Activated CD8-positive, alpha-beta T cell treated with anti-CD3 and anti-CD28 coated beads for 36 hours (primary cell): ENCODE measurements at regions of chr11 and their contacts with region 1.

Region 1: GRCh38 chr11:10540923-10541560 is at the start of gene RNF141:
- DNase-seq: peak; percentile 97
- ATAC-seq: peak; percentile 98
- H3K4me3 Mint-ChIP-seq: peak within 1 kb of the TSS; percentile 93
- H3K27ac Mint-ChIP-seq: peak within 1 kb of the TSS; percentile 86
- H3K4me1 Mint-ChIP-seq: peaks cover 24% of the 10 kb centered on the region
- H3K27me3 Mint-ChIP-seq: no peaks in the 10 kb centered on the region
- CTCF ChIP-seq: peak; percentile 87
- total RNA-seq, gene RNF141: 19.4 to 20.8 TPM

Region 2: GRCh38 chr11:10405855-10406592 is 135.0 kb before region 1 on chr11:
- CTCF ChIA-PET with region 1: interaction called, 17 read pairs
- POLR2A ChIA-PET with region 1: no interaction called
- intact Hi-C with region 1: no loop called
- DNase-seq: peak; percentile 69
- ATAC-seq: peak; percentile 92
- H3K4me3 Mint-ChIP-seq: no peak overlapping the region
- H3K27ac Mint-ChIP-seq: no peak overlapping the region
- H3K4me1 Mint-ChIP-seq: peaks cover 10% of the 10 kb centered on the region
- H3K27me3 Mint-ChIP-seq: no peaks in the 10 kb centered on the region
- CTCF ChIP-seq: peak; percentile 70

Region 3: DNA sequence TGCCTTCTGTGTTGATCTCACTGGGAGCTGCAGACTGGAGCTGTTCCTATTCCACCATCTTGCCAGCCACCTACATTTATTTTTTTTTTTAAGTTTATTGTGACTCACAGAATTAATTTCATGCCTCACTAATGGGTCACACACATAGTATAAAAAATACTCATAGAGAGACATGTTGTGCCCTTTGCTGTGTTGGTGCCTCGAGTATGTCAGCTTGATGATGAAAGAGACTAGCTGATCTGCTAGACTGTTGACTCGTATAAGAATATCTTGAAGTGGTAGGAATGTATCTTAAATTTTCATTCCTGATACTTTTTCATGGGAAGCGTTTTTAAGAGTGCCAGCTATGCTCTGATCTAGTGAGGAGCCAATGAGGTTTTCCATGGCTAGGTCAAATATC is 114.6 kb before region 1 on chr11:
- CTCF ChIA-PET with region 1: interaction called, 12 read pairs
- POLR2A ChIA-PET with region 1: no interaction called
- intact Hi-C with region 1: no loop called
- DNase-seq: no peak
- ATAC-seq: no peak
- H3K4me3 Mint-ChIP-seq: no peak overlapping the region
- H3K27ac Mint-ChIP-seq: no peak overlapping the region
- H3K4me1 Mint-ChIP-seq: no peaks in the 10 kb centered on the region
- H3K27me3 Mint-ChIP-seq: peaks cover 2% of the 10 kb centered on the region
- CTCF ChIP-seq: no peak

Region 4: GRCh38 chr11:10455637-10456487 is 85.2 kb before region 1 on chr11:
- CTCF ChIA-PET with region 1: interaction called, 40 read pairs
- POLR2A ChIA-PET with region 1: interaction called, 7 read pairs
- intact Hi-C with region 1: loop called (anchors 5 kb)
- DNase-seq: peak; percentile 89
- ATAC-seq: peak; percentile 70
- H3K4me3 Mint-ChIP-seq: peak overlapping the region; percentile 91
- H3K27ac Mint-ChIP-seq: peak overlapping the region; percentile 97
- H3K4me1 Mint-ChIP-seq: peaks cover 81% of the 10 kb centered on the region
- H3K27me3 Mint-ChIP-seq: no peaks in the 10 kb centered on the region
- CTCF ChIP-seq: no peak

Region 5: DNA sequence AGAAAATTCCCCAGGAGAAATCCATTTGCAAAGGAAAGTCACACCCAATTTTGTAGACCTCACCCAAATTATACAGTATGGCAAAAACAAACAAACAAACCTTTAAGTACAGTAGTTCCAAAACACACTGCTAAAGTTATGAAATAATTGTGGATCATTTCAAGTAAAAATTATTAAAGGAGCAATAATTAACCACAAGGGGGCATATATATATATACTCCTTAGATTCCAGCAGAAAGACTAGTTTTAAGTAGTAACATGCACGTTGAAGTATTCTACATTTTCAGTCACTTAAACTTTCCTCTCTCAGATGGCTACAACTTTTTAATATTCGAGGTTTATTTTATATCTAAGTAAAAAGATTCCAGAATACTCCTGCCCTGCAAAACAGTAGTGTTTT is 26.8 kb before region 1 on chr11:
- CTCF ChIA-PET with region 1: interaction called, 23 read pairs
- POLR2A ChIA-PET with region 1: interaction called, 3 read pairs
- intact Hi-C with region 1: no loop called
- DNase-seq: no peak
- ATAC-seq: no peak
- H3K4me3 Mint-ChIP-seq: no peak overlapping the region
- H3K27ac Mint-ChIP-seq: no peak overlapping the region
- H3K4me1 Mint-ChIP-seq: peaks cover 13% of the 10 kb centered on the region
- H3K27me3 Mint-ChIP-seq: no peaks in the 10 kb centered on the region
- CTCF ChIP-seq: no peak

Region 6: GRCh38 chr11:10606536-10607208 is 65.6 kb after region 1 on chr11:
- CTCF ChIA-PET with region 1: no interaction called
- POLR2A ChIA-PET with region 1: no interaction called
- intact Hi-C with region 1: loop called (anchors 10 kb)
- DNase-seq: no peak
- ATAC-seq: peak; percentile 24
- H3K4me3 Mint-ChIP-seq: no peak overlapping the region
- H3K27ac Mint-ChIP-seq: no peak overlapping the region
- H3K4me1 Mint-ChIP-seq: peaks cover 2% of the 10 kb centered on the region
- H3K27me3 Mint-ChIP-seq: peaks cover 6% of the 10 kb centered on the region
- CTCF ChIP-seq: no peak

Region 7: GRCh38 chr11:10653926-10654810 is 113.1 kb after region 1 on chr11:
- CTCF ChIA-PET with region 1: interaction called, 25 read pairs
- POLR2A ChIA-PET with region 1: no interaction called
- intact Hi-C with region 1: no loop called
- DNase-seq: peak; percentile 46
- ATAC-seq: peak; percentile 64
- H3K4me3 Mint-ChIP-seq: no peak overlapping the region
- H3K27ac Mint-ChIP-seq: no peak overlapping the region
- H3K4me1 Mint-ChIP-seq: peaks cover 21% of the 10 kb centered on the region
- H3K27me3 Mint-ChIP-seq: no peaks in the 10 kb centered on the region
- CTCF ChIP-seq: peak; percentile 79

Region 8: GRCh38 chr11:11000579-11001283 is 459.7 kb after region 1 on chr11:
- CTCF ChIA-PET with region 1: no interaction called
- POLR2A ChIA-PET with region 1: no interaction called
- intact Hi-C with region 1: no loop called
- DNase-seq: no peak
- ATAC-seq: no peak
- H3K4me3 Mint-ChIP-seq: no peak overlapping the region
- H3K27ac Mint-ChIP-seq: no peak overlapping the region
- H3K4me1 Mint-ChIP-seq: no peaks in the 10 kb centered on the region
- H3K27me3 Mint-ChIP-seq: peaks cover 23% of the 10 kb centered on the region
- CTCF ChIP-seq: no peak